H1 (cell line): ENCODE measurements at regions of chr15 and their contacts with region 1.

Region 1: DNA sequence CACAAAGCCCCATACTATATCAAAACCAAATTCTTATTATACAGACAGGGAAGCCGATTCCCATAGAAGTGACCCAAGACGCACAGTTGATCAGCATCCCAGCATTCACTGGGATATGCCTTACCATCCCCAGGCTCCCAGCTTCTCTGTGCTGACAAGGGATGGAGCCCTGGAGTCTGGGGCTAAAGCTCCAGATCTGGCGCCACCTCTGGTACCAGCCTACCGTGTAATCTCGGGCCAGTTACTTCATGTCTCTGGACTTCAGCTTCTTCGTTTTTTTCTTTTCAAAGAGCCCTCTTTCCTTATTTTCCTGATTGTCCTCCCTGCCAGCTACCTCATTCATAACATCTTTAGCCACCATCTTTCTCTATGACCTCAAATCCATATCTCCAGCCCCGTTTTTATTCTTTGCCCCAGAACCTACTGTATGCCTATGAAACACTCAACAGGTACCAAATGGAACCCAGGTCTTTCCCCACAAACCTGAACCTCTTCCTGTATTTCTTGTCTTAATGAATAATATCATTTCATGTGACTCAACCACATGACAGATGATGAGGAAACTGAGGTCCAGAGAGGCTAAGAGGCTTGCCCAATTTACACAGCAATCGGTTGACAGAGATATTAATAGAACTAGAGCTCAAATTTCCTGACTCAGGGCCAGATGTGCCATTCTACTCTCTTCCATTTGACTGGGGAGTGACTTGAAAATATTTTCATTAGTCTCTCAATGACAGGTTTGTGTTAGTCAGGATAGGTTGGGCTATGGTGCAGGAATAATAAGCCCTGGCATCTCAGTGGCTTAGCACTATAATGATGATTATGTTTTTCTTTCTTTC is 85.4 kb upstream of the TLE3 start:
- DNase-seq: no peak
- H3K4me3 ChIP-seq: no peak overlapping the region
- H3K27ac ChIP-seq: no peak overlapping the region
- H3K4me1 ChIP-seq: peaks cover 0 to 6% (median 2%) of the 10 kb centered on the region in 4 experiments; a peak in 4 of 7 replicates
- H3K27me3 ChIP-seq: no peaks in the 10 kb centered on the region
- CTCF ChIP-seq: peak; percentile 52 to 60 (median 54)
- EP300 ChIP-seq: no peak
- POLR2A ChIP-seq: no peak
- RAD21 ChIP-seq: peak; percentile 30 to 56; a peak in 3 of 4 replicates

Region 2: DNA sequence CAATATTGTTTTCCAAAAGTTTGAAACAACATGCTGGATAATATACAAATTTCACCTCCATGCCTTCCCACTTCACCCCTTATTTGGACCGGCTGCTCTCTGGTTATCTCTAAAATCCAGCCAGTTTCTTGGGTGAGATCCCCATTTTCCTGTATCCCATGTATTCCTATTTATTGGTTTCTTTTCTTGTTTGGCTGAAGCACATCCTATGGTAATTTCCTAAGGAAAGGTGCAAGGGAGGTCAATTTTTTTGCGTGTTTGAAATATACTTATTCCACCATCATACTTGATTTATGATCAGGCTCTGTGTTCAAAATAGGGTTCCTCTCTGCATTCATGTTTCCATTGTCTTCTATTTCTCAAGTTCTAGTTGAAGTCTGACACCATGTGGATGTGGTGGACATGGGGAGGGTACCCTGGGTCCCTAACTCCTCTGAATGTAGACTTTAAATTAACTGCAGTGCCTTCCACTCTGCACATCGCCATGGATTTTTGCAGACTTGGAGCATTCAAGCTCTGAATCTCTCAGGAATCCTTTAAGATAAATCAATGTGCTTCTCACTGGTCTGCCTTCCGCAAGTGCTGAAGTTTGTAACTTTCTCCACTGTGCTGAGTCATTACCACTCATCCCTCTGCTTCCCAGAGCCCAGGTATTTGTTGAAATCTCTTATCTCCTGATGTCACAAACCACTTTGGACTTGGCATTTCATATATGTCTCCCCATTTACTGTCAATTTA is 33.2 kb before region 1 on chr15:
- CTCF ChIA-PET with region 1: interaction called, 12 read pairs
- POLR2A ChIA-PET with region 1: no interaction called
- DNase-seq: no peak
- H3K4me3 ChIP-seq: no peak overlapping the region
- H3K27ac ChIP-seq: no peak overlapping the region
- H3K4me1 ChIP-seq: peaks cover 0 to 14% (median 7%) of the 10 kb centered on the region in 4 experiments; a peak in 4 of 7 replicates
- H3K27me3 ChIP-seq: peaks cover 0 to 2% (median 0%) of the 10 kb centered on the region in 4 experiments; a peak in 1 of 7 replicates
- CTCF ChIP-seq: no peak
- EP300 ChIP-seq: no peak
- POLR2A ChIP-seq: no peak
- RAD21 ChIP-seq: no peak

Region 3: GRCh38 chr15:70170901-70171886 is 11.9 kb before region 1 on chr15:
- CTCF ChIA-PET with region 1: interaction called, 15 read pairs
- POLR2A ChIA-PET with region 1: interaction called, 4 read pairs
- DNase-seq: no peak
- H3K4me3 ChIP-seq: no peak overlapping the region
- H3K27ac ChIP-seq: no peak overlapping the region
- H3K4me1 ChIP-seq: no peaks in the 10 kb centered on the region
- H3K27me3 ChIP-seq: no peaks in the 10 kb centered on the region
- CTCF ChIP-seq: no peak
- EP300 ChIP-seq: no peak
- POLR2A ChIP-seq: no peak
- RAD21 ChIP-seq: no peak

Region 4: DNA sequence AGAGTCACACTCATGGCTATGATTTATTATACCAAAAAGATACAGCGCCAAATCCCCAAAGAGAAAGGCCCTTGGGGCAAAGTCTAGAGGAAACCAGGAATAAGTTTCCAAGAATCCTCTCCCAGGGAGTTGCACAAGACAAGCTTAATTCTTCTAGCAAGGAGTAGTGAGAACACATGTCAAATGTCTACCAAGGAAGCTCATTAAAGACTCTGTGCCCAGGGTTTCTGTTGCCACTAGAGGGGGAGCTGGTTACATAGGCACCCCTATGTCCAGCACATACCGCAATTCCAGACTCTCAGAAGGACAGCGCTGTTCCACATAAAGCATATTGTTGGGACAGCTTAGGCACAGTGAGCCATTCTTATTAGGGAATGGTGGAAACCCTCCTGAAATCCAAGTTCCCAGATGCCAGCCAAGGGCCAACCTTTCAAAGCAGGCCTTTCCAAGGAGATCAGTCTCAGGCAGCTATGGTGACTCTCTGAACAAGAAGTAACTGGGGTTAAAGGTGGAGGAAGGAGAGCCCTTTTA is 386.1 kb after region 1 on chr15:
- CTCF ChIA-PET with region 1: no interaction called
- POLR2A ChIA-PET with region 1: no interaction called
- DNase-seq: no peak
- H3K4me3 ChIP-seq: no peak overlapping the region
- H3K27ac ChIP-seq: no peak overlapping the region
- H3K4me1 ChIP-seq: peaks cover 0 to 3% (median 1%) of the 10 kb centered on the region in 4 experiments; a peak in 1 of 7 replicates
- H3K27me3 ChIP-seq: 0 out of 7 replicates have a peak, but pooled peaks cover 0 to 2% (median 0%) of the 10 kb centered on the region in 4 experiments
- CTCF ChIP-seq: peak; percentile 47 to 72 (median 70)
- EP300 ChIP-seq: no peak
- POLR2A ChIP-seq: no peak
- RAD21 ChIP-seq: peak; percentile 81 to 88